PC-9 (cell line): ENCODE measurements at regions of chr6 and their contacts with region 1.

Region 1: DNA sequence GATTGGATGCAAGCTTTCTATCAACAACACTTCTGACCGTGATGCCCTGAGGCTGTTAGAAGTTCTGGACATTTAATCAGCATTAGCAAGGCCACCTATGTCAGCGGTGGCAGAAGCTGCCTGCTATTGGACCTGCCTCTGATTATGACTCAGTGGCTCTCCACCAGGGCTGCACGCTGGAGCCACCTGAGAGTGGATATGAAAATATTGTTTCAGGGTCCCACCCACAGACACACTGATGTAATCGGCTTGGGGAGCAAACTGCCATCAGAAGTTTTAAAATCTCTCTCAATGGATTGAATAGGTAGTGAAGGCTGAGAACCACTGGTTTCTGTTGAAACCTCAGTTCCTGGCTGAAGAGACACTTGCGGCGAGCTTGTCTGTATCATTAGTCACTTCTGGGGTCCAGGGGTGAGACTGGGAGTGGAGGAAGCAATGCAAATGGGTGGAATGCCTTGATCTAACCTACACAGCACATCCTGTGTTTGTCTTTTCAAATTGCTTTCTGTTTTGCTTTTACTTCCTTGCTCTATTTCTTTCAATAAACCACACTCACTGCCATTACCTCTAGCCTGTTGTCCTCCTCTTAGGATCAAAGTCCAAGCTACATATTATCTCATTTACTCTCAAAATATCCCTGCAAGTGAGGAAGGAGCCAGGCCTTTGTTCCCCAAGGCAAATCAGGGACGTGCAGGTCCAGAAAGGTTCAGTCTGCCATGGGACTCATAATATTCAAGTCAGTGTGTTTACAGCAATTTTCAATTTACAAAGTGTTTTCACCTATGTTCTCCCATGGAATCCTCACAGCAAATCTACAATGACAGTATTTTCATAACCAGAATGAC is 4.2 kb downstream of the CLIC5 start:
- DNase-seq: peak; percentile 52
- H3K4me3 ChIP-seq: no peak overlapping the region
- H3K27ac ChIP-seq: no peak overlapping the region
- H3K4me1 ChIP-seq: 0 out of 2 replicates have a peak, but pooled peaks cover 8% of the 10 kb centered on the region
- H3K27me3 ChIP-seq: peaks cover 31% of the 10 kb centered on the region
- CTCF ChIP-seq: no peak

Region 2: GRCh38 chr6:45946352-45946751 is 65.1 kb before region 1 on chr6:
- CTCF ChIA-PET with region 1: no interaction called
- POLR2A ChIA-PET with region 1: interaction called, 3 read pairs
- intact Hi-C with region 1: loop called (anchors 5 kb)
- DNase-seq: no peak
- H3K4me3 ChIP-seq: no peak overlapping the region
- H3K27ac ChIP-seq: no peak overlapping the region
- H3K4me1 ChIP-seq: peaks cover 11% of the 10 kb centered on the region
- H3K27me3 ChIP-seq: no peaks in the 10 kb centered on the region; the same call in 1 of the 2 replicates
- CTCF ChIP-seq: no peak